Endothelial cell of umbilical vein (primary cell): ENCODE measurements at regions of chr19 and their contacts with region 1.

Region 1: GRCh38 chr19:7852851-7853769 is 21.1 kb downstream of the PRR36 start:
- DNase-seq: peak; percentile 49
- H3K4me3 ChIP-seq: no peak overlapping the region
- H3K27ac ChIP-seq: no peak overlapping the region
- H3K4me1 ChIP-seq: no peaks in the 10 kb centered on the region
- H3K27me3 ChIP-seq: no peaks in the 10 kb centered on the region
- CTCF ChIP-seq: peak; percentile 63 to 92
- POLR2A ChIP-seq: no peak

Region 2: GRCh38 chr19:7759156-7759555 is 94.0 kb before region 1 on chr19:
- CTCF ChIA-PET with region 1: no interaction called
- POLR2A ChIA-PET with region 1: no interaction called
- dilution Hi-C with region 1: no loop called
- intact Hi-C with region 1: no loop called
- DNase-seq: no peak
- H3K4me3 ChIP-seq: no peak overlapping the region
- H3K27ac ChIP-seq: no peak overlapping the region
- H3K4me1 ChIP-seq: no peaks in the 10 kb centered on the region
- H3K27me3 ChIP-seq: no peaks in the 10 kb centered on the region
- CTCF ChIP-seq: no peak
- POLR2A ChIP-seq: no peak

Region 3: DNA sequence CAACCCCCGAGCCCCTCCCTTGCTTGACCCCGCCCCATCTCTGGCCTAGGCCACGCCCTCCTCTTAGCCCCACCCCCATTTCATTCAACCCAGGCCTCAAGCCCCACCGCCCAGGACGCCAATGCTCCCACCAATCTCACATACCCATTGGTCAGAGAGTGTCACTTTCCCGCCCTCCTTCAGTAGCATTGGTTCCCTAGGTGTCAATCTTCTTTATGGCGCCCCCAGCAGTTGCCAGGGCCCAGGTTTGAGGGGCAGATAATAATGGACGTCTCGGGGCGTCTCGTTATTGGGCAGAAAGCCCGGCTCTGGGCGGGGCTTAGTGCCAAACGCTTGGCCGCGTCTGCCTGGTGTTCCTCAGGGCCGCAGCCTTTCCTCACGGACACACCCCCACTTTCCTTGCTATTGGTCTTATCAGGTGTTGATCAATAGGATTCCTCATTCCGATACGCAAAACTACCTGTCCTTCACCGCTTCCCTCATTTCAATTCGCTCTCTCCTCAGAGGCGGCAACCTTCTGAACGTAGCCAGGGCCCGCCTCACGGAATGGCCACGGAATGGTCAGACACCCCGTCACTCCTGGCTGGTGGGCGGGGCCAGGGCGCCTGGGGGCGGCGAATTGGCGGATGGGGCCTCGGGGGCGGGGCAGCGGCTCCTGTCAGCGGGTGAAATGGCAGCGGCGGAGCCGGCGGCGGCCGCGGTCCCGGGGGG is 23.4 kb before region 1 on chr19 and contains the start of gene EVI5L:
- CTCF ChIA-PET with region 1: interaction called, 12 read pairs
- POLR2A ChIA-PET with region 1: no interaction called
- dilution Hi-C with region 1: no loop called
- intact Hi-C with region 1: no loop called
- DNase-seq: peak; percentile 100
- H3K4me3 ChIP-seq: peak within 1 kb of the TSS; percentile 35 to 89 (median 55)
- H3K27ac ChIP-seq: peak within 1 kb of the TSS; percentile 13
- H3K4me1 ChIP-seq: peaks cover 11% of the 10 kb centered on the region
- H3K27me3 ChIP-seq: peaks cover 0 to 3% of the 10 kb centered on the region in 2 experiments
- CTCF ChIP-seq: no peak
- POLR2A ChIP-seq: no peak
- total RNA-seq, gene EVI5L: 13.5 and 18.3 TPM in 2 replicates

Region 4: GRCh38 chr19:7883796-7884570 is 30.9 kb after region 1 on chr19:
- CTCF ChIA-PET with region 1: no interaction called
- POLR2A ChIA-PET with region 1: no interaction called
- dilution Hi-C with region 1: no loop called
- intact Hi-C with region 1: no loop called
- DNase-seq: no peak
- H3K4me3 ChIP-seq: no peak overlapping the region
- H3K27ac ChIP-seq: no peak overlapping the region
- H3K4me1 ChIP-seq: peaks cover 8% of the 10 kb centered on the region
- H3K27me3 ChIP-seq: no peaks in the 10 kb centered on the region
- CTCF ChIP-seq: no peak
- POLR2A ChIP-seq: no peak

Region 5: DNA sequence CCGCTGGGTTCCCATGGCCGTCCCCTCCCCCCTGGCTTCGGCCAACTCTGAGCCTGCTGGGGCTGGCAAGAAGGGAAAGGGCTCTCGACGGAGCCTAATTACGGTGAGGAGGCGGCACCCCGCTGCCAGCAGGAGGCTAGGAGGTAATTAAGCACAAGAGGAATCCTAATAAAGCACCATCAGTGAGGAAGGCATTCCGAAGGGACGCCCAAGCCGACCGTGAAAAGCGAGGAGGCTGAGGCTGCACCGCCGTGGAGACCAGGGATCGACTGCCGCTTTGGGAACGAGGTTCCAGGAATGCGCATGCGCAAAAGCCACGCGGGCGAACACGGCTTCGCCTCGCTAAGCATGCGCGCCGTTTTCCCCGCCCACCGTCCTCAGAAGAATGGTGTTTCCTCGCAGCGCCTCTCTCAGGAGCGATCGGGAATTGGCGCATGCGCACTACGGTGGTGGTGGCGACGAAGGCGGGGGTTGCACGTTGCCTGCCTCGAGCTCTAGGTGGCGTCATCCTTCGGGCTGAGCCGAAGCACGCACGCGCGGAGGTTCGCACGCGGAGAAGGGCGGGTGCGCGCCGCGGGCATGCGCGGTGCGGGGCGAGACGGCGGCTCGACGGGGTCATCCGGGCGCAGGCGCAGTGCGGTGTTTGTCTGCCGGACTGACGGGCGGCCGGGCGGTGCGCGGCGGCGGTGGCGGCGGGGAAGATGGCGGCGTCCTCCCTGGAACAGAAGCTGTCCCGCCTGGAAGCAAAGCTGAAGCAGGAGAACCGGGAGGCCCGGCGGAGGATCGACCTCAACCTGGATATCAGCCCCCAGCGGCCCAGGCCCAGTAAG is 50.3 kb after region 1 on chr19 and contains the start of gene MAP2K7:
- CTCF ChIA-PET with region 1: interaction called, 4 read pairs
- POLR2A ChIA-PET with region 1: no interaction called
- dilution Hi-C with region 1: no loop called
- intact Hi-C with region 1: loop called (anchors 1 kb)
- DNase-seq: peak; percentile 100
- H3K4me3 ChIP-seq: peak within 1 kb of the TSS; percentile 62 to 93 (median 71)
- H3K27ac ChIP-seq: peak within 1 kb of the TSS; percentile 62
- H3K4me1 ChIP-seq: peaks cover 16% of the 10 kb centered on the region
- H3K27me3 ChIP-seq: no peaks in the 10 kb centered on the region
- CTCF ChIP-seq: peak; percentile 64 to 67
- POLR2A ChIP-seq: peak; percentile 98
- total RNA-seq, gene MAP2K7: 31.6 and 36.0 TPM in 2 replicates

Region 6: DNA sequence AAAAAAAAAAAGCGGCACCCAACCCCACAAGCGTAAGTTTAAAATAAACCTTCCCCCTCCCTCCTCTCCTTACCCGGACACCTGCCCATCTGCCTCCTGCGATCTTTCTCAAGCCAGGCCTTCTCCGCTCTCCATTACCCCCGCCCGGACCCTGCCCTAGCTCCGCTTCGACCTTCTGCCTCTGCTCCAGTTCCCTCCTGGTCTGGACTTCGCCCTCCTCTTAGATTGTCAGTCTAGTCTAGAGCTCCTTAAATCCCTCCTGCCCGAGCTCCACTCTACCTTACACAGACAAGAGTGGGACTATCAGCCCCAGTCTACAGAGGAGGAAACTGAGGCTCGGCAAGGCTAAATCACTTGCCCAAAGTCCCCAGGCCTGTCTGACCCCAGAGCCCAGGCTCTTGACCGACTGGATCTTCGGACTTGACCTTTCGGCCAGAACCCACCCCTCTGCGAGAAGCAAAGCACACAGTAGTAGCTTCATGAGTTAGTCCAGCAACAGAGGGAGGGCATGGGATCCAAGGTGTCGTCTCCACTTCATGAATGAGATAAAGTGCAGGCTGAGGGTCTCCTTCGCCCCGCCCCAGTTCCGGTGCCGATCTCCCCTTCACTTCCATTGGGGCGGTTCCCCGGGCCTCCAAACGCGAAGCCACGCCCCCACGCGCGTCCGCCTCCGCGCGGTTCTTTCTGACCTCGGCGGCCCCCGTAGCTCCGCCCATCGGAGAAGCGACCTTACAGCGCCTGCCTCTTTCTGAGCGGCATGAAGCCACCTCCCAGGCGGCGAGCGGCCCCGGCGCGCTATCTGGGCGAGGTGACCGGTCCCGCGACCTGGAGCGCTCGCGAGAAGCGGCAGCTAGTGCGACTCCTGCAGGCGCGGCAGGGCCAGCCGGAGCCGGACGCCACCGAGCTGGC is 66.8 kb after region 1 on chr19 and contains the start of gene SNAPC2:
- CTCF ChIA-PET with region 1: interaction called, 11 read pairs
- POLR2A ChIA-PET with region 1: no interaction called
- dilution Hi-C with region 1: no loop called
- intact Hi-C with region 1: loop called (anchors 1 kb)
- DNase-seq: peak; percentile 94
- H3K4me3 ChIP-seq: peak within 1 kb of the TSS; percentile 61 to 79 (median 63)
- H3K27ac ChIP-seq: peak within 1 kb of the TSS; percentile 13
- H3K4me1 ChIP-seq: peaks cover 22% of the 10 kb centered on the region
- H3K27me3 ChIP-seq: peaks cover 18 to 31% of the 10 kb centered on the region in 2 experiments
- CTCF ChIP-seq: no peak
- POLR2A ChIP-seq: peak; percentile 68
- total RNA-seq, gene SNAPC2: 23.7 and 29.2 TPM in 2 replicates

Region 7: GRCh38 chr19:7925171-7925851 is 72.2 kb after region 1 on chr19:
- CTCF ChIA-PET with region 1: interaction called, 8 read pairs
- POLR2A ChIA-PET with region 1: no interaction called
- dilution Hi-C with region 1: no loop called
- intact Hi-C with region 1: loop called (anchors 1 kb)
- DNase-seq: peak; percentile 79
- H3K4me3 ChIP-seq: peak overlapping the region in 2 of 3 experiments; percentile 18 to 29
- H3K27ac ChIP-seq: no peak overlapping the region
- H3K4me1 ChIP-seq: peaks cover 28% of the 10 kb centered on the region
- H3K27me3 ChIP-seq: no peaks in the 10 kb centered on the region
- CTCF ChIP-seq: peak; percentile 95 to 96
- POLR2A ChIP-seq: no peak

Region 8: GRCh38 chr19:8095903-8096470 is 242.9 kb after region 1 on chr19:
- CTCF ChIA-PET with region 1: no interaction called
- POLR2A ChIA-PET with region 1: no interaction called
- dilution Hi-C with region 1: no loop called
- intact Hi-C with region 1: no loop called
- DNase-seq: no peak
- H3K4me3 ChIP-seq: no peak overlapping the region
- H3K27ac ChIP-seq: no peak overlapping the region
- H3K4me1 ChIP-seq: no peaks in the 10 kb centered on the region
- H3K27me3 ChIP-seq: no peaks in the 10 kb centered on the region
- CTCF ChIP-seq: no peak
- POLR2A ChIP-seq: no peak